Psoas muscle (tissue), 8 donors: ENCODE measurements at regions of chr1 and their contacts with region 1.

Region 1: DNA sequence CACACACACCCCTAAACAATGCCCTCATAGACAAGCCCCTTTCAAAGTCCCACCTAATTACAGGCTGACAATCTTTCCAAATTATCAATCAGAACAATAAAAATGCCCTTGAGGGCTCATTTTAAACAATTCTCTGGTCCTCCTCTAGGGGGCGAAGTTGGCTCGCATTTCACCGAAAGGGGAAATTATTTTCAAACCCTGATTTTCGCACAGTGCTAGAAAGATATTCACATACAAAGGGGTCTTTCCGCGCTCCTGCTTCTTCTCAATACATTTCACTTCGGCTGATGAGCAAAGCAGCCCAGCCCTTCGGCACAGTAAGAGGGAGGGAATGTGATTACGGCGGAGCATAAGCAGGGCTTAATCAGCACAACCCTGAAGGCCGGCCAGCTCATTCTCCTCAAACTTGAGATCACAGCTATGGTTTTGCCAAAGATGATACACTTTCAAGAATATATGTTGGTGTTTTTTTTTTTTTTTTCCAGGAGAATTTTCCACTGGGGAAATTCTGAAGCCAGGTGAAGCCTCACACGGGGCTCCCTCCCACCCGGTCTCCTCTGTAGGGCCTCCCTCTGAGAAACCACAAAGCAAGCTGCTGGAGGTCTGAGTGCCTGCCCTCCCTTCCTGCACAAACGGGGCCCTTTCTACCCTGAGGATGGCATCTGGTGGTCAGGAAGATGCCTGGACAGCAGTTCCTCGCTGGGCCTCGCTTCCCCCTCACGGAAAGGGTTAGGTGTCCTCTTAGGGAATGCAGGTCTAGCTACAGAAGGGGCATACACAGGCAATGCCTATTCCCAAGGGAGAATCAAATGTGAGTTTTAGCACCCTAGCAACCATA is 66.9 kb downstream of the GNG12 start:
- DNase-seq: peak in 1 of 2 donors; percentile 41
- ATAC-seq: peak; percentile 46 to 81 (median 62)
- H3K4me3 ChIP-seq: peak overlapping the region; percentile 22
- H3K27ac ChIP-seq: no peak overlapping the region
- H3K4me1 ChIP-seq: no peaks in the 10 kb centered on the region
- H3K27me3 ChIP-seq: no peaks in the 10 kb centered on the region
- CTCF ChIP-seq: peak; percentile 74

Region 2: GRCh38 chr1:67832737-67833601 is 66.6 kb after region 1 on chr1 and contains the start of gene GNG12:
- intact Hi-C with region 1: loop called (anchors 5 kb)
- DNase-seq: peak; percentile 74 to 84
- ATAC-seq: peak; percentile 79 to 82 (median 82)
- H3K4me3 ChIP-seq: peak within 1 kb of the TSS; percentile 91
- H3K27ac ChIP-seq: peak within 1 kb of the TSS; percentile 85
- H3K4me1 ChIP-seq: peaks cover 18% of the 10 kb centered on the region
- H3K27me3 ChIP-seq: no peaks in the 10 kb centered on the region
- CTCF ChIP-seq: no peak
- total RNA-seq, gene GNG12: 18.6 to 25.1 (median 20.3) TPM

Region 3: GRCh38 chr1:68111519-68112436 is 345.4 kb after region 1 on chr1:
- intact Hi-C with region 1: loop called (anchors 5 to 10 kb)
- DNase-seq: peak; percentile 59 to 85
- ATAC-seq: peak; percentile 75 to 90 (median 87)
- H3K4me3 ChIP-seq: no peak overlapping the region
- H3K27ac ChIP-seq: no peak overlapping the region
- H3K4me1 ChIP-seq: peaks cover 11% of the 10 kb centered on the region
- H3K27me3 ChIP-seq: no peaks in the 10 kb centered on the region
- CTCF ChIP-seq: peak; percentile 60